ENCODE measurements at regions of chr9 and their contacts with region 1.

Region 1: GRCh38 chr9:128771745-128772519 is at the start of gene ZER1:
- DNase-seq: peak; percentile 85 to 98 (median 96)

Region 2: DNA sequence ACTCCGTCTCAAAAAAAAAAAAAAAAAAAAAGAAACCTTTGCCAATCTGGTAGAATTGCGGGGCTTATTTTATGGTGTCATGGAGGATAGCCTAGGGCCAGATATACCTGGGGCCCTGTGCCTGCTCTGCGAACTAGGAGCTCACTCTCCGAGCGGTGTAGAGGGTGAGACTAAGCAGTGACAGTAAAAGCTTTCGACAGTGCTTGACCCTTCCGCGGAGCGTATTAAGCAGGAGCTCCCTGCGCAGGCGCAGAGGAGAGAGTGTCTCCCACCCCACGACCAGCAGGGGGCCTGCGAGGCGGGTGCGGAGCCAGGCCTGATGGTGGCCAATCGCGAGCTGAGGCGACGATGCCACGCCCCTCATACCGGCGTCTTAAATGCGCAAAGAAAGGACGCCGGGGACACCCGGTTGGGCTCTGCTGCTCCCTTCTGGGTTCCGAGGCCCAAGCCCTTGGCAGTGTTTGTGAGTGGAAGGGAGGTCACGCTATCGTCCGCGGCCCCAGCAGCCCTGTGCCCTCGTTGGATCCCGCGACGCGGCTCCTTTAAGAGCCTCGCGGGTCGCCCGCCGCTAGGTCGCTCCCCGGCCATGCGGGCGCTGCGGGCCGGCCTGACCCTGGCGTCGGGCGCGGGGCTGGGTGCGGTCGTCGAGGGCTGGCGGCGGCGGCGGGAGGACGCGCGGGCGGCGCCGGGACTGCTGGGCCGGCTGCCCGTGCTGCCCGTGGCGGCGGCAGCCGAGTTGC is 46.3 kb after region 1 on chr9 and contains the start of gene ENDOG:
- intact Hi-C with region 1: loop called (anchors 2 kb)
- DNase-seq: peak; percentile 96 to 99 (median 98)

Region 3: GRCh38 chr9:129028192-129028957 is 256.4 kb after region 1 on chr9 and contains the start of gene SH3GLB2:
- intact Hi-C with region 1: no loop called
- DNase-seq: peak; percentile 88 to 100 (median 98)